ENCODE measurements at regions of chr11 and their contacts with region 1.

Region 1: DNA sequence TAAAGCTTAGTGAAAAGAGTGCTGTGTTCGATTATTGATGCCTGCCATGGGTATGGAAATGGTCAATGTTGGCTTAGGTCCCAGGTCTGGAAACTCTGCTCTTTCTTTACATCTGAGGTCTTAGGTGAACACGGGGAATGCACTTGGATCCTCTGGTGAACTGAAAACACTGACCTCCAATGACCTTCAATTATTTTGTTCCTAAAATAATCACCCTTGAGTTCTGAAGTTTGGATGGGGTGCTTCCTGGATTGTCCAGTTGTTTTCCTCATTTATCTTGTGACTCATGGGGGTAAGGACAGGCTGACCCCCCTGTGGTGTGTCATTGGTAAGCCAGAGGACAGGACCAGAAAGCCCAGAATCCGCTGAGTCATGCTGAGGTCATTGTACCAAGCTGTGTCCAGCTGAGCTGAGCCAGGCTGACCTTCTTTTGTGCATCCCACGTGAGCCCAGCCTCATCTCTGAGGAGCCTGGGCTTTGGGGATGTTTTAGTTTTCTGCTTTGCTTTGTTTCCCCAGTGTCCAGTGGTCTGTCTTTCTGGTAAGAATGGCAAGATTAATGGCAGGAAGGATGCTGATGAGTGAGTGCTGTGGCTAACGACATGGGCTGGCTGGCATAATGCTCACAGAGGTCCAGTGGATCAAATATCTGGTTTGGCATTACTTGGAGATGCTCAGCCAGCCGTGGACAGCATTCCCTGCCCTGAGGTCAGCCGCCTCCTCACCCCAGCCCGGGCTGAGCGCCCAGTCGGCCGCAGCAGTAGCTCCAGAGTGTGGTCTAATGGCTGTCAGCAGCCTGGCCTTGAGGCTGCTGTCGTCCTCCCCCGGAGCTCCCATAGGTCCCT is 35.6 kb downstream of the AMPD3 start:
- DNase-seq: peak; percentile 95 to 96
- ATAC-seq: peak; percentile 92 to 95
- H3K4me3 ChIP-seq: no peak overlapping the region
- H3K27ac ChIP-seq: peak overlapping the region; percentile 86 to 90 (median 88)
- H3K4me1 ChIP-seq: peaks cover 28 to 29% of the 10 kb centered on the region in 2 donors
- H3K27me3 ChIP-seq: no peaks in the 10 kb centered on the region
- CTCF ChIP-seq: no peak
- POLR2A ChIP-seq: no peak

Region 2: GRCh38 chr11:10522921-10523320 is 32.3 kb after region 1 on chr11:
- in situ Hi-C with region 1: no loop called
- intact Hi-C with region 1: no loop called
- DNase-seq: no peak
- ATAC-seq: peak; percentile 18 to 38
- H3K4me3 ChIP-seq: no peak overlapping the region
- H3K27ac ChIP-seq: peak overlapping the region in 3 of 4 donors; percentile 15 to 62 (median 44)
- H3K4me1 ChIP-seq: peaks cover 21% of the 10 kb centered on the region in 2 donors
- H3K27me3 ChIP-seq: no peaks in the 10 kb centered on the region
- CTCF ChIP-seq: no peak
- POLR2A ChIP-seq: no peak

Region 3: GRCh38 chr11:10540923-10541560 is 50.4 kb after region 1 on chr11 and contains the start of gene RNF141:
- in situ Hi-C with region 1: no loop called
- intact Hi-C with region 1: loop called (anchors 5 kb)
- DNase-seq: peak; percentile 91 to 93
- ATAC-seq: peak; percentile 90 to 93
- H3K4me3 ChIP-seq: peak within 1 kb of the TSS; percentile 89 to 93 (median 92)
- H3K27ac ChIP-seq: peak within 1 kb of the TSS; percentile 91 to 97 (median 94)
- H3K4me1 ChIP-seq: peaks cover 8 to 13% of the 10 kb centered on the region in 2 donors
- H3K27me3 ChIP-seq: no peaks in the 10 kb centered on the region
- CTCF ChIP-seq: peak; percentile 82 to 88 (median 83)
- POLR2A ChIP-seq: peak; percentile 80 to 93
- total RNA-seq, gene RNF141: 16.8 to 38.2 (median 19.0) TPM

Region 4: DNA sequence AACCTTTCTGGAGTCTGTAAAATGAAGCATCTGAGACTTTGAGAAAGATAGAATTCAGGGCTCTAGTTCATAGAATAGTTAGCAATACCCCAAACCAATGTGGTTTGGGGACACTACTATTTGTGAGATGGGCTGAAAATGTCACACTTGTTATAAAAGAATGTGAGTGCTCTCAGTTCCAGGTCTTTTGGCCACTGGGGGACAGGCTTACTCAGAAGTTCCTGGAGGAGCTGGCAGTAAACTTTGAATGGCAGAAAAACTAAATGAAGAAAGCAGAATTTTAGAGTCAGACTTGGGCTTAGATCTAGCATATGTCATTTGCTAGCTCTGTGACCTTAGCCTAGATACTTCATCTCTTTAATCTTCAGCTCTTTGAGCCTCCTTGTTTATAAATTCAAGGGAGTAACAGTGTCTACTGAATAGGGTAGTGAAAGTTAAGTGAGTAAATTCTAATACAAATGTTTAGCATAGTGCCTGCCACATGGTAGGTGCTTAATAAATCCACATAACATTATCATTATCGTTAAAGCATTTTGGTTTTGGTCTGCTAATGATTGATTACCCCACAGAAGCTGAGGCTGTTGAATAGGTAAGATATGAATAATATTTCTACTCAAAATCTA is 74.2 kb after region 1 on chr11:
- in situ Hi-C with region 1: no loop called
- intact Hi-C with region 1: no loop called
- DNase-seq: no peak
- ATAC-seq: no peak
- H3K4me3 ChIP-seq: peak overlapping the region in 1 of 4 donors; percentile 28
- H3K27ac ChIP-seq: no peak overlapping the region
- H3K4me1 ChIP-seq: peaks cover 0 to 21% of the 10 kb centered on the region in 2 donors
- H3K27me3 ChIP-seq: no peaks in the 10 kb centered on the region
- CTCF ChIP-seq: peak in 2 of 5 experiments; percentile 38 to 41
- POLR2A ChIP-seq: no peak

Measured in gastrocnemius medialis (tissue), 4 donors.